SK-N-SH (cell line): ENCODE measurements at regions of chr14 and their contacts with region 1.

Region 1: DNA sequence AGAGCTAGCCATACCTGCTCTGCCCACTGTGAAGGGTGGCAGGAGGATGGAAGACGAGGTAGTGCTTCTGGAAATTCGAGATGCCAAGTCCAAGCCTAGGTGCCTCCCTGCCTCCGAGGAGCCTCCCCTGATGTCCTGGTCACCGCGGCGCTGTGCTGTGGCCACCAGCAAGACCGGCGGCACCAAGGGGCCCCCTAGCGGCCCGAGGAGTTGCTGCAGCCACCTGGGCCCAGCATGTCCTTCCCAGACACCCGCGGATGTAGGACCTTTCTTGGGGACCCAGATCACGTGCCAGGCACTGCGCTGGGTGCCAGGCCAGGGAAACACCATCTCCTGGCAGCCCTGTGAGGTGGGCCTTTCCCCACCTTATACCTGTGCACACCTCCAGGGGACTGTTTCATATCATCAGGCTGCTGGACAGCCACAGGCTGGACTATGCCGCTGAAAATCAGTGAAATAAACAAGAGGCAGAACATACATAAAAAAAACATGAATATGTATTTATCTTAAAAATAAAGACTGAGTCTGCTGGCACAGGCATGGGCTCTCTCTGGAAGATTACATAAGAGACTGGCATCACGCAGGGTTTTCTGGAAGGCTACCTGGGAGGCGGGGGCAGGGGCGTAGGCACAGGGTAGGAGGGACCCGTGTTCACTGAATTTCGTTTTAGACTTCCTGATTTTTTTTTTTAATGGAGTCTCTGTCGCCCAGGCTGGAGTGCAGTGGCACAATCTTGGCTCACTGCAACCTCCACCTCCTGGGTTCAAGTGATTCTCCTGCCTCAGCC is 15.9 kb upstream of the HHIPL1 start:
- DNase-seq: peak; percentile 93
- H3K4me3 ChIP-seq: peak overlapping the region in 1 of 2 experiments; percentile 50; a peak in 1 of 4 replicates
- H3K27ac ChIP-seq: no peak overlapping the region
- H3K4me1 ChIP-seq: peaks cover 0 to 29% of the 10 kb centered on the region in 2 experiments; a peak in 2 of 4 replicates
- H3K27me3 ChIP-seq: no peaks in the 10 kb centered on the region
- CTCF ChIP-seq: peak; percentile 96
- EP300 ChIP-seq: no peak
- RAD21 ChIP-seq: peak; percentile 97

Region 2: GRCh38 chr14:99518441-99519346 is 110.3 kb before region 1 on chr14:
- CTCF ChIA-PET with region 1: interaction called, 34 read pairs
- POLR2A ChIA-PET with region 1: no interaction called
- DNase-seq: peak; percentile 94
- H3K4me3 ChIP-seq: peak overlapping the region in 1 of 2 experiments; percentile 49; a peak in 1 of 4 replicates
- H3K27ac ChIP-seq: peak overlapping the region in 1 of 2 experiments; percentile 31; a peak in 1 of 4 replicates
- H3K4me1 ChIP-seq: peaks cover 11 to 27% of the 10 kb centered on the region in 2 experiments; a peak in 3 of 4 replicates
- H3K27me3 ChIP-seq: no peaks in the 10 kb centered on the region
- CTCF ChIP-seq: peak; percentile 90
- EP300 ChIP-seq: no peak
- RAD21 ChIP-seq: peak; percentile 95

Region 3: DNA sequence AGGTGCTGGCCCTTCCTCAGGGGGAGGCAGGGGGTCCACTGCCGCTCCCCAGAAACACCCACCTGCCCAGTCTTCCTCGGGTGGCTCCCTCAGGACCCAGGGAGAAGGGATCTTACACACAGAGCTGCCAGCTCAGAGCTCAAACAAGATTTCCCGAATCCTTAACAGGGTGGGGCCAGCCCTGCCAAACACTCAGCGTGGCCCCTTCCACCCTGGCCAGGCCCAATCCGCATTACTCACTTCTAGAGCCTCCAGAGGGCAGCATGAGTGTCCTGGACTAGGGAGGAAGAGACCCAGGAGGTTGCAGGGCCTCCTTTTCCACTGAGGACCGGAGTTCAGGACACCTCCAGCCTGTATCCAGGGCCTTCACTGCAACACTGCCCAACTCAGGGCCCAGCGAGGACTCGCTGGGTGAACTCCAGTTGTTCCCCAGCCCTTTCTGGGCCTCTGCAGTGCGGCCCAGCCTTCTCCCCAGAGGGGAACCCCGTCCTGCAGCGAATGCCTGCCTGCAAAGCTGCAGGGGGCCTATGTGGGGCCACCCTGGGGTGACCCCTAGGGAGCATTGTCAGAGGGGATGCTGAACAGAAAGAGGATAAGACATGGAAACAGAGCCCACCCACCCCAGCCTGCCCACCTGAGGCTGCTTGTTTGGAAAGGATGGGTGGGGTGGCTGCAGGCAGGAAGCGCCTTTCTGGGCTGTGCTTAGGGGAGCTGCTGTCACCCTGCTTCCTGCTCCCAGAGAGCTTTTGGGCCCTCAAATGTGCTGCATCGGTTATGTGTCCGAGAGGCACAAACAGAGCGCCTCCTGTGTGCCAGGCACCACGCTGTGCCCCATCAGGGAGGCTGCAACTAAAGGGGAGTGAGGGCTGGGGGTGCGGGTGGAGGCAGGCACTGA is 104.0 kb before region 1 on chr14:
- CTCF ChIA-PET with region 1: interaction called, 28 read pairs
- POLR2A ChIA-PET with region 1: no interaction called
- DNase-seq: peak; percentile 57
- H3K4me3 ChIP-seq: no peak overlapping the region
- H3K27ac ChIP-seq: no peak overlapping the region; a peak in 1 of 4 replicates
- H3K4me1 ChIP-seq: peaks cover 13 to 54% of the 10 kb centered on the region in 2 experiments; a peak in 3 of 4 replicates
- H3K27me3 ChIP-seq: no peaks in the 10 kb centered on the region
- CTCF ChIP-seq: peak; percentile 44
- EP300 ChIP-seq: no peak
- RAD21 ChIP-seq: peak; percentile 57

Region 4: GRCh38 chr14:99755629-99756603 is 126.9 kb after region 1 on chr14:
- CTCF ChIA-PET with region 1: no interaction called
- POLR2A ChIA-PET with region 1: no interaction called
- DNase-seq: no peak
- H3K4me3 ChIP-seq: no peak overlapping the region
- H3K27ac ChIP-seq: peak overlapping the region in 1 of 2 experiments; percentile 97; a peak in 2 of 4 replicates
- H3K4me1 ChIP-seq: peaks cover 9 to 57% of the 10 kb centered on the region in 2 experiments; a peak in 3 of 4 replicates
- H3K27me3 ChIP-seq: no peaks in the 10 kb centered on the region
- CTCF ChIP-seq: no peak
- EP300 ChIP-seq: peak in 1 of 2 experiments; percentile 75; a peak in 1 of 4 replicates
- RAD21 ChIP-seq: 0 out of 2 replicates have a peak, but pooled peaks have one; percentile 4